Naive thymus-derived CD4-positive, alpha-beta T cell (primary cell): ENCODE measurements at regions of chr1 and their contacts with region 1.

Region 1: DNA sequence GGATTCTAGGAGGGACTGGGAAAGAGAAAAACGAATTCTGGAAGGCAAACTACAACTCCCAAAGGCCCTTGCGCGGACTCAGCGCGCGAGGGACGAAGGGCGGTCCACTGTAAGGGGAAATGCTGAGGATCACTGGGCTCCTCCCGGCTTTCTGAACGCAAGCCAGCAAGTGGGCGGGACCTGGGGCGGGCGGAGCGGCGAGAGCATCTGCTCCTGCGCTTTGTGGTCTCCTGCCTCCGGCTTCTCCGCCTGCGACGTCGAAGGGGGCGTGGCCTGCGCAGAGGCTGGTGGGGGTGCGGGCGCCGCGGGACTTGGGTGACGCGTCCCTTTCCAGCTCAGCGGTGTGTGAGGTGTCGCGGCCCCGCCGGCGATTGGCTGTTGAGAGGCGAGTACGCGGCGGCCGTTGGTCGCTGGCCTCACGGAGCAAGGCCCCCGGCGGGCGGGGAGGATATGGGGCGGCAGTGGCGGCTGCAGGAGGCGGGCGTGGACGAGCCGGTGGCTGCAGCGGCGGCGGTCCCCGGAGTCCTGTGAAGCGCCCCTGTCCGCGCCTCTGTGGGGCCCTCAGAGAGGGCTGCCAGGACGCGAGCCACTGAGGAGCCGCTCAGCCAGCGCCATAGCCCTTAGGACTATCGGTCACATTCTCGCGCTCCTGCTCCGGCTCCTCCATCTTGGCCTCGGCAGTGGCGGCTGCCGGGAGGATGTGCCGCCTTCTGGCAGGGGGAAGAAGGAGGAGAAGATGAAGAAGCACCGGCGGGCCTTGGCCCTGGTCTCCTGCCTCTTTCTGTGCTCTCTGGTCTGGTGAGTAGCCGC is at the start of gene SUCO:
- DNase-seq: peak; percentile 97 to 100 (median 99)
- ATAC-seq: peak; percentile 90
- H3K4me3 ChIP-seq: peak within 1 kb of the TSS; percentile 98
- H3K4me3 Mint-ChIP-seq: peak within 1 kb of the TSS; percentile 90 to 100 (median 98)
- H3K27ac ChIP-seq: peak within 1 kb of the TSS; percentile 99
- H3K27ac Mint-ChIP-seq: peak within 1 kb of the TSS; percentile 99 to 100 (median 100)
- H3K4me1 ChIP-seq: peaks cover 30 to 34% of the 10 kb centered on the region in 2 donors
- H3K4me1 Mint-ChIP-seq: peaks cover 32 to 60% (median 49%) of the 10 kb centered on the region in 7 donors
- H3K27me3 ChIP-seq: no peaks in the 10 kb centered on the region
- H3K27me3 Mint-ChIP-seq: peaks cover 0 to 16% (median 4%) of the 10 kb centered on the region in 5 donors
- total RNA-seq, gene SUCO: 52.0 to 95.0 (median 77.0) TPM

Region 2: DNA sequence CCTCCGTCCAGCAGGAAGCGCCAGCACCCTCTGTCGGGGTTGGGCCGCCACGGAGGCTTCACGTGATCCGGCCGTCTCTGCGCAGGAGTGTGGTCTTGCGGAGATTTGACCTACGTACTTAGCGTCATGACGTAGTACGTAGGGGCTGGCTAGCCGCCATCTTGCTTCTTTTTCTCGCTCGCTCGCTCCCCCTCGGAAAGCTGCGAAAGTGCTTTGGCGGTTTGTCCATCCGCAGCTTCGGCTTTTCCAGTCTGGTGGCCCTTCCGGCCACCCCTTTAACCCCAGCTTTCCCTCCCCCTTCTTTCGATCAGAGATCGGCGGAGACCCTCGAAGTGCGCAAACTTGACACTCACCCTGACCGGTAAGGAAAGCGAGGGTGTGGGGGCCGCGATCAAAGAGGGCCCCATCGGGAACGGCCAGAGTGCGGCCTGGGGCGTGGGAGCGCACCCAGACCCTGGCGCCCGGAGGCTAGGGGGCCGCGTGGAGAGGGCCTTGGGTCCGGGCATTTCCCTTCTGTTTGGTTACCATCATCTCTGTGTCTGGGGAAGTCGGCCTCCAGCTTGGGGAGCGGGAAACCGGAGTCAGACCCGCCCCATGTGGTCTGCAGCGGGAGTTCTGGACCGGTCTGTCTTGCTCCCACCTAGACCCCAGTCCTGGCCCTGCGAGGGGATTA is 1047.4 kb before region 1 on chr1 and contains the start of gene PRRC2C:
- CTCF ChIA-PET with region 1: no interaction called
- POLR2A ChIA-PET with region 1: no interaction called
- intact Hi-C with region 1: loop called (anchors 1 kb)
- DNase-seq: peak; percentile 80 to 95 (median 94)
- ATAC-seq: peak; percentile 93
- H3K4me3 ChIP-seq: peak within 1 kb of the TSS; percentile 93
- H3K4me3 Mint-ChIP-seq: peak within 1 kb of the TSS; percentile 83 to 99 (median 96)
- H3K27ac ChIP-seq: peak within 1 kb of the TSS; percentile 99
- H3K27ac Mint-ChIP-seq: peak within 1 kb of the TSS; percentile 92 to 100 (median 97)
- H3K4me1 ChIP-seq: peaks cover 34 to 46% of the 10 kb centered on the region in 2 donors
- H3K4me1 Mint-ChIP-seq: peaks cover 39 to 54% (median 49%) of the 10 kb centered on the region in 7 donors
- H3K27me3 ChIP-seq: no peaks in the 10 kb centered on the region
- H3K27me3 Mint-ChIP-seq: no peaks in the 10 kb centered on the region
- total RNA-seq, gene PRRC2C: 256 to 341 (median 293) TPM

Region 3: GRCh38 chr1:172180501-172181285 is 352.2 kb before region 1 on chr1:
- CTCF ChIA-PET with region 1: no interaction called
- POLR2A ChIA-PET with region 1: no interaction called
- intact Hi-C with region 1: loop called (anchors 1 to 2 kb)
- DNase-seq: peak in 8 of 9 donors; percentile 18 to 50 (median 40)
- ATAC-seq: peak; percentile 72
- H3K4me3 ChIP-seq: peak overlapping the region; percentile 56
- H3K4me3 Mint-ChIP-seq: peak overlapping the region; percentile 61 to 91 (median 82)
- H3K27ac ChIP-seq: peak overlapping the region; percentile 80
- H3K27ac Mint-ChIP-seq: peak overlapping the region; percentile 95 to 99 (median 97)
- H3K4me1 ChIP-seq: peaks cover 21 to 23% of the 10 kb centered on the region in 2 donors
- H3K4me1 Mint-ChIP-seq: peaks cover 26 to 59% (median 45%) of the 10 kb centered on the region in 7 donors
- H3K27me3 ChIP-seq: no peaks in the 10 kb centered on the region
- H3K27me3 Mint-ChIP-seq: no peaks in the 10 kb centered on the region

Region 4: GRCh38 chr1:172449585-172450534 is 83.0 kb before region 1 on chr1:
- CTCF ChIA-PET with region 1: interaction called, 7 read pairs
- POLR2A ChIA-PET with region 1: interaction called, 15 read pairs
- intact Hi-C with region 1: loop called (anchors 1 kb)
- DNase-seq: peak in 7 of 9 donors; percentile 22 to 42 (median 32)
- ATAC-seq: peak; percentile 90
- H3K4me3 ChIP-seq: no peak overlapping the region
- H3K4me3 Mint-ChIP-seq: peak overlapping the region in 4 of 10 donors; percentile 35 to 67 (median 56)
- H3K27ac ChIP-seq: no peak overlapping the region
- H3K27ac Mint-ChIP-seq: peak overlapping the region in 4 of 9 donors; percentile 45 to 90 (median 87)
- H3K4me1 ChIP-seq: no peaks in the 10 kb centered on the region
- H3K4me1 Mint-ChIP-seq: peaks cover 0 to 23% (median 18%) of the 10 kb centered on the region in 7 donors
- H3K27me3 ChIP-seq: no peaks in the 10 kb centered on the region
- H3K27me3 Mint-ChIP-seq: peaks cover 0 to 3% (median 0%) of the 10 kb centered on the region in 5 donors

Region 5: DNA sequence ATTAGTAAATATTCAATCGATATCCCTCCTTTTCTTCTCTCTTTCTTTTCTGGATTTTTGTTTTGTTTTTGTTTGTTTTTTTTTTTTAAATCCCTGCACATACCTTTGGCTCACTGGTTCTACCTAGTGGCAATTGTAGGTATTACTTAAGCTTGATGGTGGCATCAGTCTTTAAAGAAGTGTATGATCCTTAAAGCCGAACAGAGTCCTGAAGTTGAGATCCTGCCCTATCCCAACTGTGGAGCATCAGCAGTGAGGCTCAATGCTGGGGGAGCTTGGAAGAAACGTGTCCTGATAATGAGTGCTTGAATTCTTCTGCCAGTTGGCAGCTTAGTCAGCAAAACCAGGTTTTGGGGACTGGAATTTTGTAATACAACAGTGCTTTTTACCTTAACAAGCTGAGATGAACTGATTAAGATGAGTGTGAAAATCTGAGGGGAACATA is 186.8 kb after region 1 on chr1:
- CTCF ChIA-PET with region 1: no interaction called
- POLR2A ChIA-PET with region 1: no interaction called
- intact Hi-C with region 1: loop called in 1 of 2 experiments (anchors 1 kb)
- DNase-seq: peak in 7 of 9 donors; percentile 29 to 61 (median 48)
- ATAC-seq: peak; percentile 87
- H3K4me3 ChIP-seq: no peak overlapping the region
- H3K4me3 Mint-ChIP-seq: no peak overlapping the region
- H3K27ac ChIP-seq: no peak overlapping the region
- H3K27ac Mint-ChIP-seq: peak overlapping the region in 4 of 9 donors; percentile 0 to 22 (median 9)
- H3K4me1 ChIP-seq: peaks cover 0 to 13% of the 10 kb centered on the region in 2 donors
- H3K4me1 Mint-ChIP-seq: peaks cover 21 to 50% (median 32%) of the 10 kb centered on the region in 7 donors
- H3K27me3 ChIP-seq: no peaks in the 10 kb centered on the region
- H3K27me3 Mint-ChIP-seq: peaks cover 0 to 8% (median 0%) of the 10 kb centered on the region in 5 donors

Region 6: GRCh38 chr1:173824331-173825081 is 1291.6 kb after region 1 on chr1 and contains the starts of genes CENPL and DARS2:
- CTCF ChIA-PET with region 1: no interaction called
- POLR2A ChIA-PET with region 1: no interaction called
- intact Hi-C with region 1: loop called in 1 of 2 experiments (anchors 1 kb)
- DNase-seq: peak; percentile 67 to 93 (median 91)
- ATAC-seq: peak; percentile 94
- H3K4me3 ChIP-seq: peak within 1 kb of the TSS; percentile 99
- H3K4me3 Mint-ChIP-seq: peak within 1 kb of the TSS; percentile 87 to 99 (median 94)
- H3K27ac ChIP-seq: peak within 1 kb of the TSS; percentile 80
- H3K27ac Mint-ChIP-seq: peak within 1 kb of the TSS; percentile 91 to 98 (median 96)
- H3K4me1 ChIP-seq: peaks cover 10 to 14% of the 10 kb centered on the region in 2 donors
- H3K4me1 Mint-ChIP-seq: peaks cover 32 to 68% (median 50%) of the 10 kb centered on the region in 7 donors
- H3K27me3 ChIP-seq: no peaks in the 10 kb centered on the region
- H3K27me3 Mint-ChIP-seq: no peaks in the 10 kb centered on the region
- total RNA-seq, gene CENPL: 5.2 to 25.1 (median 9.5) TPM
- total RNA-seq, gene DARS2: 3.6 to 26.0 (median 13.5) TPM